B cell (primary cell): ENCODE measurements at regions of chr2 and their contacts with region 1.

Region 1: GRCh38 chr2:127479219-127479825 is 47.0 kb downstream of the IWS1 start:
- DNase-seq: peak; percentile 67
- ATAC-seq: peak; percentile 36
- H3K4me3 ChIP-seq: no peak overlapping the region
- H3K4me3 Mint-ChIP-seq: no peak overlapping the region
- H3K27ac ChIP-seq: no peak overlapping the region
- H3K27ac Mint-ChIP-seq: no peak overlapping the region
- H3K4me1 ChIP-seq: no peaks in the 10 kb centered on the region
- H3K4me1 Mint-ChIP-seq: no peaks in the 10 kb centered on the region
- H3K27me3 ChIP-seq: no peaks in the 10 kb centered on the region
- H3K27me3 Mint-ChIP-seq: no peaks in the 10 kb centered on the region
- CTCF ChIP-seq: peak; percentile 93

Region 2: DNA sequence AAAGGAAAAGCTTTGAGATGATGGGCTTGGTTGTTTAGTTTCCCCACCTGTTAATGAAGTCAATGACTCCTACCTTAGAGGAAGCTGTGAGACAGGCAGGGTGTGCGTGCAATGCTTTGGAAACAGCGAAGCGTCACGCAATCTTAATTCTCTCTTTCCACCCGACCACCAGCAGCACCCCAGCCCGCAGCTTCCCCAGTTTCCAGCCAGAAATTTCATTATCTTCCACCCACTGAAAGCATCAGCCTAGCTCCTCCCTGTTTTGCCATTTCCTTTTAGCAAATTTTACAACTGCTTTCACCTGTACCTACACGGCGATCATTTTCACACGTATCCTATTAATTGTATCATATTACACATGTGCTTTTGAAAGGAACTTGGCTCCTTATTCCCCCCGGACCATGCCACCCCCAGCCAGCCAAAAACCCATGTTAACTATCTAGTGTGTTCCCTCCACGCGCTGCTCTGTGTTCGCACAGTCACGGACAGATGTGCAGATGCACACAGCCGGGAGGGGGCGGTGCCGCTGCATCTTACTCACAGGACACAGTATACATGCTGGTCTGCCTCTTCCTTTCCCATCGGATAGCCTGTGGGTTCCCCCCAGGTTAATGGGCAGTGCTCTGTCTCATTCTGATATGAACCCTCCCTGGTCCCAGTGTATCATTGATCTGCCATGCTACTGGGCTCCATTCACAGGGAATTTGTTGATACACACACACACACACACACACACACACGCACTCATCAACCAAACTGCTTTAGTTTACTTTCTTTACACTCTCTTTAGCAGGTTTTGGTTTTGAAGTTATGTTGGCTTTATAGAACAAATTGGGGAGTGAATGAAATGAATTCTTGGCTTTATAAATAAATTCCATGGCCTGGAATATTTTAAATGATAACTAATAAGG is 281.6 kb before region 1 on chr2:
- CTCF ChIA-PET with region 1: interaction called, 33 read pairs
- POLR2A ChIA-PET with region 1: no interaction called
- intact Hi-C with region 1: loop called (anchors 1 kb)
- DNase-seq: peak; percentile 60
- ATAC-seq: peak; percentile 68
- H3K4me3 ChIP-seq: peak overlapping the region in 2 of 5 experiments; percentile 7 to 15
- H3K4me3 Mint-ChIP-seq: peak overlapping the region; percentile 79
- H3K27ac ChIP-seq: no peak overlapping the region
- H3K27ac Mint-ChIP-seq: no peak overlapping the region
- H3K4me1 ChIP-seq: no peaks in the 10 kb centered on the region
- H3K4me1 Mint-ChIP-seq: peaks cover 5% of the 10 kb centered on the region
- H3K27me3 ChIP-seq: no peaks in the 10 kb centered on the region
- H3K27me3 Mint-ChIP-seq: peaks cover 3% of the 10 kb centered on the region
- CTCF ChIP-seq: peak; percentile 31

Region 3: DNA sequence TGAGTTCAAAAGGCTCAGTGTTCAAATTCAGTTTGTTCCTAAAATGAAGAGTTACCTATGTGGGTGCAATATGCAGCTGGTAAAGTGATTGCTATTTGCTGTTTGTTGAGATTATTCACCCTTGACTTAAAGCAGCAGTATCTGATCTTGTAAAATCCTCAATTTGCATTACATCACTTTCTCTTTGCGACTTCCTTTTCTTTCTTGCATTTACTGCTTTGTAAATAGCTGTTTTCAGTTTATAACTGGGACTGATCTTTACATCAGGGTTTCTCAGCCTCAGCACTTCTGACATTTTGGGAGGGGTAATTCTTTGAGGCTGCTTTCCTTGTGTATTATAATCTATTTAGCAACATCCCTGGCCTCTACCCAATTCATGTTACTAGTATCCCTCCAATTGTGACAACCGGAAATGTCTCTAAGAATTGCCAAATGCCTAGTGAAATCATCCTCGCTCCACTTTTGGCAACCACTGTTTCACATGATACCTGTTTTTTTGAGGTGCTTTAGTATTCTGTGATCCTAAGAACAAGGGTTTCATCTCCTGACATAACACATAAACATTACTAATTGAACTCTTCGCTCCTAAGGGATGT is 173.2 kb before region 1 on chr2:
- CTCF ChIA-PET with region 1: interaction called, 18 read pairs
- POLR2A ChIA-PET with region 1: no interaction called
- intact Hi-C with region 1: no loop called
- DNase-seq: peak; percentile 24
- ATAC-seq: peak; percentile 10
- H3K4me3 ChIP-seq: no peak overlapping the region
- H3K4me3 Mint-ChIP-seq: peak overlapping the region; percentile 21
- H3K27ac ChIP-seq: peak overlapping the region; percentile 0 to 36
- H3K27ac Mint-ChIP-seq: peak overlapping the region; percentile 17
- H3K4me1 ChIP-seq: peaks cover 0 to 3% of the 10 kb centered on the region in 2 donors
- H3K4me1 Mint-ChIP-seq: peaks cover 12% of the 10 kb centered on the region
- H3K27me3 ChIP-seq: no peaks in the 10 kb centered on the region
- H3K27me3 Mint-ChIP-seq: no peaks in the 10 kb centered on the region
- CTCF ChIP-seq: no peak

Region 4: GRCh38 chr2:127324635-127325034 is 154.7 kb before region 1 on chr2:
- CTCF ChIA-PET with region 1: interaction called, 70 read pairs
- POLR2A ChIA-PET with region 1: no interaction called
- intact Hi-C with region 1: loop called (anchors 1 kb)
- DNase-seq: peak; percentile 32
- ATAC-seq: no peak
- H3K4me3 ChIP-seq: no peak overlapping the region
- H3K4me3 Mint-ChIP-seq: no peak overlapping the region
- H3K27ac ChIP-seq: no peak overlapping the region
- H3K27ac Mint-ChIP-seq: no peak overlapping the region
- H3K4me1 ChIP-seq: no peaks in the 10 kb centered on the region
- H3K4me1 Mint-ChIP-seq: no peaks in the 10 kb centered on the region
- H3K27me3 ChIP-seq: no peaks in the 10 kb centered on the region
- H3K27me3 Mint-ChIP-seq: no peaks in the 10 kb centered on the region
- CTCF ChIP-seq: peak; percentile 62

Region 5: GRCh38 chr2:127342101-127342500 is 137.2 kb before region 1 on chr2:
- CTCF ChIA-PET with region 1: interaction called, 11 read pairs
- POLR2A ChIA-PET with region 1: no interaction called
- intact Hi-C with region 1: no loop called
- DNase-seq: peak; percentile 37
- ATAC-seq: no peak
- H3K4me3 ChIP-seq: no peak overlapping the region
- H3K4me3 Mint-ChIP-seq: no peak overlapping the region
- H3K27ac ChIP-seq: peak overlapping the region in 1 of 2 donors; percentile 44
- H3K27ac Mint-ChIP-seq: peak overlapping the region; percentile 0
- H3K4me1 ChIP-seq: peaks cover 0 to 14% of the 10 kb centered on the region in 2 donors
- H3K4me1 Mint-ChIP-seq: peaks cover 33% of the 10 kb centered on the region
- H3K27me3 ChIP-seq: no peaks in the 10 kb centered on the region
- H3K27me3 Mint-ChIP-seq: no peaks in the 10 kb centered on the region
- CTCF ChIP-seq: no peak

Region 6: DNA sequence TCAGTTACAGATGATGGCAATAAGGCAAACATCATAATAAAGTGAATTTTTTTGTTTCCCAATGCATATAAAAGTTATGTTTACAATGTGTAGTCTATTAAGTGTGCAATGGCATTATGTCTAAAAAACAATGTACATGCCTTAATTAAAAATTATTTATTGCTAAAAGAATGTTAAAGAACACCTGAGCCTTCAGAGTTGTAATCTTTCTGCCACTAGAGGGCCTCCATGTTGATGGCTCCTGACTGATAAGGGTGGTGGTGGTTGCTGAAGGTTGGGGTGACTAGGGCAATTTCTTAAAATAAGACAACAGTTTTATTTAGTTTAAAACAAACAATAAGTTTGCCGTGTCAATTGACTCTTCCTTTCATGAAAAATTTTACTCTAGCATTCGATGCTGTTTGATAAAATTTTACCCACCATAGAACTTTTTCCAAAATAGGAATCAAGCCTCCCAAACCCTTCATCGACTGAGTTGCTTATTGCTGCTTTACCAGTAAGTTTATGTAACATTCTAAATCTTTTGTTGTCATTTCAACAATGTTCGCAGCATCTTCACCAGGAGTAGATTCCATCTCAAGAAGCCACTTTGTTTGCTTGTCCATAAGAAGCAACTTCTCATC is 123.8 kb before region 1 on chr2:
- CTCF ChIA-PET with region 1: interaction called, 22 read pairs
- POLR2A ChIA-PET with region 1: no interaction called
- intact Hi-C with region 1: loop called (anchors 1 kb)
- DNase-seq: peak; percentile 64
- ATAC-seq: peak; percentile 56
- H3K4me3 ChIP-seq: no peak overlapping the region
- H3K4me3 Mint-ChIP-seq: no peak overlapping the region
- H3K27ac ChIP-seq: peak overlapping the region in 1 of 2 donors; percentile 1
- H3K27ac Mint-ChIP-seq: no peak overlapping the region
- H3K4me1 ChIP-seq: peaks cover 6 to 19% of the 10 kb centered on the region in 2 donors
- H3K4me1 Mint-ChIP-seq: peaks cover 57% of the 10 kb centered on the region
- H3K27me3 ChIP-seq: no peaks in the 10 kb centered on the region
- H3K27me3 Mint-ChIP-seq: no peaks in the 10 kb centered on the region
- CTCF ChIP-seq: peak; percentile 80

Region 7: DNA sequence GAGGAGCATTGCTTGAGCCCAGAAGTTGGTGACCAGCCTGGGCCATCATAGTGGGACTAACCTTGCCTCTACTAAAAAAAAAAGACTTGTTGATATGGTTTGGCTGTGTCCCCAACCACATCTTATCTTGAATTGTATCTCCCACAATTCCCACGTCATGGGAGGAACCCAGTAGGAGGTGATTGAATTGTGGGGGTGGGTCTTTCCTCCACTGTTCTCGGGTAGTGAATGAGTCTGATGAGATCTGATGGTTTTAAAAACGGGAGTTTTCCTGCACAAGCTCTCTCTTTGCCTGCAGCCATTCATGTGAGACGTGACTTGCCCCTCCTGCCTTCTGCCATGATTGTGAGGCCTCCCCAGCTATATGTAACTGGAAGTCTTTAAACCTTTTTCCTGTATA is 14.1 kb before region 1 on chr2:
- CTCF ChIA-PET with region 1: interaction called, 16 read pairs
- POLR2A ChIA-PET with region 1: no interaction called
- intact Hi-C with region 1: no loop called
- DNase-seq: no peak
- ATAC-seq: no peak
- H3K4me3 ChIP-seq: no peak overlapping the region
- H3K4me3 Mint-ChIP-seq: no peak overlapping the region
- H3K27ac ChIP-seq: no peak overlapping the region
- H3K27ac Mint-ChIP-seq: no peak overlapping the region
- H3K4me1 ChIP-seq: no peaks in the 10 kb centered on the region
- H3K4me1 Mint-ChIP-seq: no peaks in the 10 kb centered on the region
- H3K27me3 ChIP-seq: no peaks in the 10 kb centered on the region
- H3K27me3 Mint-ChIP-seq: no peaks in the 10 kb centered on the region
- CTCF ChIP-seq: no peak

Region 8: GRCh38 chr2:127640082-127641072 is 161.1 kb after region 1 on chr2:
- CTCF ChIA-PET with region 1: no interaction called
- POLR2A ChIA-PET with region 1: no interaction called
- intact Hi-C with region 1: no loop called
- DNase-seq: peak; percentile 82
- ATAC-seq: peak; percentile 83
- H3K4me3 ChIP-seq: no peak overlapping the region
- H3K4me3 Mint-ChIP-seq: peak overlapping the region; percentile 57
- H3K27ac ChIP-seq: peak overlapping the region; percentile 62 to 76
- H3K27ac Mint-ChIP-seq: peak overlapping the region; percentile 95
- H3K4me1 ChIP-seq: peaks cover 69 to 77% of the 10 kb centered on the region in 2 donors
- H3K4me1 Mint-ChIP-seq: peaks cover 68% of the 10 kb centered on the region
- H3K27me3 ChIP-seq: no peaks in the 10 kb centered on the region
- H3K27me3 Mint-ChIP-seq: no peaks in the 10 kb centered on the region
- CTCF ChIP-seq: peak; percentile 29